Sciatic nerve (tissue), 2 donors: ENCODE measurements at regions of chr21 and their contacts with region 1.

Region 1: DNA sequence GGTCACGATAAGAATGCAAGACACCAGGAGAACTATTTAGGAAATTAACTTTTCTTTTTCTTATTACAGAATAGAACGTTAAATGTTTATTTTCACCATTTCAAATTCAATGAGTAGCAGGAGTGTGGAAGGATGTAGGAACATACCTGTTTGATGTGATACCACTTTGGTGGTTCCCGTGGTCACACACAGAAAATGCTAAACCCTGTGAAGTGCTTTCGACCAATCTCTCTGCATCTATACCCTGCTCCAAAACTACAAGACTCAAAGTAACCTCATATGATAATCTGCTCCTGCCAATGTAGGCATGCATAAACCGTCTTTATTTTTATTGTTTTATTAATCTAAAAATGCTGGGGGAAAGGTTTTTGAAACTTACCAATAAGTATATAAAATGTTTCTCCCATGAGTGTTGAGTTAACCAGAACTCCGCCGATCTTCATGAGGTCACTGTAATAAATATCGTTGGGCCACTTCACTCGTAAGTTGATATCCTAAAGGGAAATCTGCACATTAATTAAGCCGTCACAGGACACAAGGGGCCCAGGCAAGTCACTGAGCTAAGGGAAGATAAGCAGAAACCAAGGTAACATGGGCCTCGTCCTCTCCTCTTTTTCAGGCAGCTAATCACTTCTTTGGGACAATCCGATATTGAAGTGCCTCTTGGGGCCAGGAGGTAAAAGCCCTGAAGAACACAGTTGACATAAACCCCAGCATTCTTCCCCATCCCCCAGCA is 60.6 kb downstream of the SIM2 start:
- DNase-seq: no peak
- ATAC-seq: no peak

Region 2: GRCh38 chr21:35855484-35855883 is 904.0 kb before region 1 on chr21:
- intact Hi-C with region 1: loop called (anchors 5 kb)
- DNase-seq: no peak
- ATAC-seq: no peak